ENCODE measurements at regions of chr17 and their contacts with region 1.

Region 1: DNA sequence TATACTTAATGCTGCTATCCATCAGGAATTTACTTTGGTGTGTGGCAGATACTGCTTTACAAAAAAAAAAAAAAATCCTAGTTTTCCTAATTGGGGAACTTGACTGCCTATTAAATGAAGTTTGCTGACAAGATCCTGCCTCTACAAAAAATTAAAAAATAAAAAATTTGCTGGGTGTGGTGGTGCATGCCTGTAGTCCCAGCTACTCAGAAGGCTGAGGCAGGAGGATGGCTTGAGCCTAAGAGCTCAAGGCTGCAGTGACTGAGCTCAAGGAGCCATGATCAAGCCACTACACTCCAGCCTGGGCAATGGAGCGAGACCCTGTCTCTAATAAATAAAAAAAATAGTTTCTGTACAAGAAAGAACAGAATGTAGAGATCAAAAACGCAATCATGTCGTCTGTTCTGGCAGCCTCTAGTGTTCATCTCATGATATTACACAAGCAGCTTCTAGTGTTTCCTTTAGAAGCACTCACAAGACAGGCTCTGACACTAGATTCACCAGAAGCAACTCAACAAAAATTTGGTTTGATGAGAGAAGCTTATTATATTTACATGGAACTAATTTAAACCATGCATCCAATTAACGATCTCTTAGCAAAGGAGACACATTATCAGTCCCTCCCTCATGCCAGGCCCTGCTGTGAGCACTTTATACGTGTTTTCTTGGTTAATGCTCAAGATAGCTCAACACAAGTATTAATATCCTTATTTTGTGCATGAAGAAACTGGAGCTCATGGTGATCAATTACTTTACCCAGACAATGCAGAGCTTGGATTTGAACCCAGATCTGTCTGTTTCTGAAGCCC is 6.8 kb upstream of the KRTAP17-1 start:
- DNase-seq: no peak

Region 2: GRCh38 chr17:40803617-40804082 is 518.6 kb before region 1 on chr17:
- intact Hi-C with region 1: loop called (anchors 10 kb)
- DNase-seq: peak; percentile 79

Region 3: DNA sequence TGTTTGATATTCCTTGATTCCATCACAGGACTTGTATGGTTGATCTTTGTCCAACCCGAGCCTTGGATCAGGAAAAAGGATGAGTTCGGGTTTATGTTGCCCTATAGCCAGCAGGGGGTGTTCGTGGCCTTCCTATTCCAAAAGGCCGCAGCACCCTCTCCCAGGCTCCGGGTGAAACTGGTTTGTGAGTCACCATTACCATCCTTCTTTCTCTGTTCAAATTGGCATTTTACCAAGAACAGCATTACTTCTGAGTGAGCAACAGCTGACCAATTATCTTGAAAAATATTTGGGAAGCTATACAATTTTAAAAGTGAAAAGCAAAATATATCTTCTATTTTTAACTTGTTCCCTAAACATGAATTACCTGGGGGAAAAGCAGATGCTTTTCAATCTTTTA is 412.9 kb before region 1 on chr17:
- intact Hi-C with region 1: loop called (anchors 5 kb)
- DNase-seq: peak; percentile 82

Region 4: DNA sequence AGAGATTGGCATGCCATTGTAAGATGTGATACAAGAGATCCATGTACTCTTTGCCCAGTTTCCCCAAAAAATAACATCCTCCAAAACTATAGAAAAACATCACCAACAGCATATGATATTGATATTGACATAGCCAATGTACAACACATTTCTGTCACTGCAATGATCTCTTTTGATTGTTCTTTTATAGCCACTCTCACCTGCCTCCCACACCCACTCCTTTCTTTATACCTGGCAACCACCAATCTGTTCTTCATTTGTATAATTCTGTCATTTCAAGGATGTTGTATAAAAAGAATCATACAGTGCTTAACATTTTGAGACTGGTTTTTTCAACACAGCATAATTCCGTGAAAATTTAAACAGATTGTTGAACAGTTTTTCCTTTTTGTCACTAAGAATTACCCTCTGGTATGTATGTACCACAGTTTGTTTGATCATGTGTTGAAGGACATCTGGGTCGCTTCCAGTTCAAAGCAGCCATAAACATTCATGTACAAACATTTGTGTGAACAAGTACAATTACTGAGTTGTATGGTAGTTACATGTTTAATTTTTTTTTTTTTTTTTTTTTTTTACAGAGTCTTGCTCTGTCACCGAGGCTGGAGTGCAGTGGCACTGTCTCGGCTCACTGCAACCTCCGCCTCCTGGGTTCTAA is 122.7 kb before region 1 on chr17:
- intact Hi-C with region 1: no loop called
- DNase-seq: no peak

Region 5: DNA sequence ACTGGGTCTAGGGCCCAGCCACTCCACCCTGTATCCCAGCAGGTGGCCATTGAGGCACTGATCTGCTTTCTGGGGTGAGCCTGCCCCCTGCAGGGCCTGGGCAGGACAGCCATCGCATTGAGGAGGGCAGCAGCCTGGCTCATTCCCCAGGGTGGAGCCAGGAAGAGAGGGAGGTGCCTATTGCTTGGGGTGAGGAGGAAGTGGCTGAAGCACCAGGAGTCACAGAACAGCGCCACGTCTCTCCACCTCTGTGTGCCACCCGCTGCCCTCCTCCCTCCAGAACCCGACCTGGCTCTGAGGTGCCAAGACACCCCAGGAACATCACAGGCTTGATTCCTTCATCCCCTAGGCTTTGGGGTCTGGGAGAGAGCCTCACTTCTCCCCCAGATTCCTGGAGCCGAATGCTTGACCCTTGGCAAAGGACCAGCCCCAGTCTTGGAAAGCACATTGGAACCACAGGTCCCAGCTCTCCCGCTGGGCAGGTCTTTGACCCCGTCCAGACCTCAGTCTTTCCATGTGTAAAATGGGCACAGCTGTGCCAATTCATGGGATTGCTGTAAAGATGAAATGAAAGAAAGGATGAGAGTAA is 174.6 kb after region 1 on chr17:
- intact Hi-C with region 1: loop called (anchors 10 kb)
- DNase-seq: peak; percentile 90